Naive thymus-derived CD4-positive, alpha-beta T cell (primary cell): ENCODE measurements at regions of chr18 and their contacts with region 1.

Region 1: GRCh38 chr18:45690975-45691815 is 32.8 kb upstream of the SLC14A1 start:
- DNase-seq: peak; percentile 42 to 80 (median 70)
- ATAC-seq: peak; percentile 30
- H3K4me3 ChIP-seq: no peak overlapping the region
- H3K4me3 Mint-ChIP-seq: peak overlapping the region in 3 of 10 donors; percentile 19 to 60 (median 31)
- H3K27ac ChIP-seq: no peak overlapping the region
- H3K27ac Mint-ChIP-seq: peak overlapping the region in 2 of 9 donors; percentile 14 to 15
- H3K4me1 ChIP-seq: peaks cover 38 to 42% of the 10 kb centered on the region in 2 donors
- H3K4me1 Mint-ChIP-seq: peaks cover 29 to 53% (median 43%) of the 10 kb centered on the region in 7 donors
- H3K27me3 ChIP-seq: no peaks in the 10 kb centered on the region
- H3K27me3 Mint-ChIP-seq: peaks cover 0 to 58% (median 5%) of the 10 kb centered on the region in 5 donors

Region 2: GRCh38 chr18:45664824-45665763 is 26.1 kb before region 1 on chr18:
- CTCF ChIA-PET with region 1: interaction called, 102 read pairs
- POLR2A ChIA-PET with region 1: interaction called, 120 read pairs
- intact Hi-C with region 1: loop called (anchors 1 kb)
- DNase-seq: peak; percentile 35 to 76 (median 63)
- ATAC-seq: peak; percentile 86
- H3K4me3 ChIP-seq: no peak overlapping the region
- H3K4me3 Mint-ChIP-seq: peak overlapping the region; percentile 1 to 87 (median 62)
- H3K27ac ChIP-seq: no peak overlapping the region
- H3K27ac Mint-ChIP-seq: peak overlapping the region; percentile 8 to 91 (median 50)
- H3K4me1 ChIP-seq: peaks cover 41 to 49% of the 10 kb centered on the region in 2 donors
- H3K4me1 Mint-ChIP-seq: peaks cover 38 to 67% (median 53%) of the 10 kb centered on the region in 7 donors
- H3K27me3 ChIP-seq: no peaks in the 10 kb centered on the region
- H3K27me3 Mint-ChIP-seq: peaks cover 0 to 20% (median 0%) of the 10 kb centered on the region in 5 donors

Region 3: DNA sequence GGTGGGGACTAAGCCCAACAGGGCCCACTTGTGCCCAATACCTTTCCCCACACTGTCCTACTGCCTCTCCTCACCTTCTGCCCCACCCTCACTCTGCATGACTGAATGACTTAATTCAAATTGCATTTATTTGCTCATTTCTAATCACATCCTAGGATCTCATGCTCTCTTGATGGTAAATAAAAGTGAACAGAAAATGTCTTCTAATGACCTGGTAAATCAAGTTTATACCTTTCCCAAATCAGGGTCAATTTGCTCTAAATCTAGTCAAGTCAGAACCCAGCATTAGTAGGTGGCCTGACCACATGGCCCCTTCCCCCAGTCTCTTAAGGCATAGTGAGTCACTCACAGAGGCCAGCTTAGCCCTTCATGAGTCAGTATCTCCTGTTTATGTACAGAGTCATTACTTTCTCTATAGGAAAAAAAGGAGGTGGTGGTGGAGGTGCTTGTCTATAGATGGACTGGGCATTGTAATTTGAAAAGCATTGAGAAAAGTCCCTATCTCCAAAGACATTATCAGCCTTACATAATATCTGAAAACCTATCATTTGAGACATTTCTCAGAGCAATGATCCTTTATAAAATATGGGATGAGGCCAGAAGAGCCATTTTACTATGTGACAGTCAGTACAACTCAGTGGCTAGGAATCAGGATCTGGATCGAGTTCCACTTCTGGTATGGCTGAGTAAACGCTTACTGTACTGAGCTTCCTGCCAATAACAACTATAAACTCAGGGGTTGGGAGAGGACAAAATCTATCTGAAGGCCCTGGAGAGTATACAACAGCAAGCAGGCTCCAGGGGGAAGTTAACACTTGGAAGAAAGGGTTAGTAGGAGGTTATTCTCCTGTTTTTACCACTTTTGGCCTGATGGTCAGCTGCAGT is 111.7 kb after region 1 on chr18:
- CTCF ChIA-PET with region 1: interaction called, 3 read pairs
- POLR2A ChIA-PET with region 1: no interaction called
- intact Hi-C with region 1: loop called in 1 of 2 experiments (anchors 1 kb)
- DNase-seq: no peak
- ATAC-seq: peak; percentile 41
- H3K4me3 ChIP-seq: no peak overlapping the region
- H3K4me3 Mint-ChIP-seq: no peak overlapping the region
- H3K27ac ChIP-seq: no peak overlapping the region
- H3K27ac Mint-ChIP-seq: no peak overlapping the region
- H3K4me1 ChIP-seq: no peaks in the 10 kb centered on the region
- H3K4me1 Mint-ChIP-seq: peaks cover 0 to 4% (median 0%) of the 10 kb centered on the region in 7 donors
- H3K27me3 ChIP-seq: no peaks in the 10 kb centered on the region
- H3K27me3 Mint-ChIP-seq: peaks cover 5 to 32% (median 11%) of the 10 kb centered on the region in 5 donors

Region 4: DNA sequence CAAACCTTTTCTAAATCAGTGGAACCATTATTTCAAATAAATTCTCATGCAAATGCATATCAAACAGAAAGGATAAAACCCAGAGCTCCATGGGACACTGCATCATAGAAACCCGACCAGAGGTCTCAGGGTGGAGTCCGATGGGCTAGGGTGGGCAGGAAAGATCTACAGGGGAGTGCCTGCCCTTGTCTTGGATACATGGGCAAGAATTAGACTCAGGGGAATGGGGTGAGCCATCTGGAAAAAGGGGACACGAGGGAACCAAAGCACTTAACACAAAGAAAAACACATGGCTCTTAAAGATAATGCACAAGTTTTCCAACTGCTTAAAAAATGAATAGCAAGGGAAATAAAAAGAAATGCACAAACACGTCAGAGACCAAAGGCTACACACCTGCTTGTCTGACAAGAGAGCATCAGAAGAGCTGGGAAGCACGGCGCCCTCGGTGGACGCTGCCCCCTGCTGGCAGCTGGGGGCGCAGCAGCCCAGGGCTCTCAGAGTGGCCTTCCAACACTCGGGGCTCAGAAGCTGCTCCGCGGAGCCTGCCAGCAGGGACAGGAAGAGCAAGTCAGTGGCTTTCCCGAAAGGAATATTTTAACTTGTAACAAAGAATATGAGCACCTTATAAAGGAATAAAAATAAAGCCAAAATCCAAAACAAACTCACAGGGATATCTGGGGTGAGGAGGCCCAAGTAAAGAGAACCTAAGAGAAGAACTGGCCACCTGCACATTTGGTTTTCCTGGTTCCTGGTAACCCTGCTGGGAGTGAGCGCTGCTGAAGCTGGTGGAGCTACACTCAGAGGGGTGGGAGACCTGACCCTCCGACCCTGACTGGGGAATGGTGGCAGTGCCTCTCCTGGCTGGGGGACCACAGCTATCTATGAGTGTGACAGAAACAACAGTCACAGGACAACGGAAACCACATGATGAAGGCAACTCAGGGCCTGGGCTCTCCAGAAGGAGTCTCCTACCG is 188.8 kb after region 1 on chr18:
- CTCF ChIA-PET with region 1: interaction called, 57 read pairs
- POLR2A ChIA-PET with region 1: interaction called, 3 read pairs
- intact Hi-C with region 1: loop called (anchors 1 kb)
- DNase-seq: peak; percentile 48 to 80 (median 69)
- ATAC-seq: peak; percentile 98
- H3K4me3 ChIP-seq: no peak overlapping the region
- H3K4me3 Mint-ChIP-seq: peak overlapping the region in 1 of 10 donors; percentile 8
- H3K27ac ChIP-seq: no peak overlapping the region
- H3K27ac Mint-ChIP-seq: peak overlapping the region in 7 of 9 donors; percentile 17 to 67 (median 41)
- H3K4me1 ChIP-seq: peaks cover 0 to 3% of the 10 kb centered on the region in 2 donors
- H3K4me1 Mint-ChIP-seq: peaks cover 9 to 16% (median 16%) of the 10 kb centered on the region in 7 donors
- H3K27me3 ChIP-seq: no peaks in the 10 kb centered on the region
- H3K27me3 Mint-ChIP-seq: no peaks in the 10 kb centered on the region

Region 5: DNA sequence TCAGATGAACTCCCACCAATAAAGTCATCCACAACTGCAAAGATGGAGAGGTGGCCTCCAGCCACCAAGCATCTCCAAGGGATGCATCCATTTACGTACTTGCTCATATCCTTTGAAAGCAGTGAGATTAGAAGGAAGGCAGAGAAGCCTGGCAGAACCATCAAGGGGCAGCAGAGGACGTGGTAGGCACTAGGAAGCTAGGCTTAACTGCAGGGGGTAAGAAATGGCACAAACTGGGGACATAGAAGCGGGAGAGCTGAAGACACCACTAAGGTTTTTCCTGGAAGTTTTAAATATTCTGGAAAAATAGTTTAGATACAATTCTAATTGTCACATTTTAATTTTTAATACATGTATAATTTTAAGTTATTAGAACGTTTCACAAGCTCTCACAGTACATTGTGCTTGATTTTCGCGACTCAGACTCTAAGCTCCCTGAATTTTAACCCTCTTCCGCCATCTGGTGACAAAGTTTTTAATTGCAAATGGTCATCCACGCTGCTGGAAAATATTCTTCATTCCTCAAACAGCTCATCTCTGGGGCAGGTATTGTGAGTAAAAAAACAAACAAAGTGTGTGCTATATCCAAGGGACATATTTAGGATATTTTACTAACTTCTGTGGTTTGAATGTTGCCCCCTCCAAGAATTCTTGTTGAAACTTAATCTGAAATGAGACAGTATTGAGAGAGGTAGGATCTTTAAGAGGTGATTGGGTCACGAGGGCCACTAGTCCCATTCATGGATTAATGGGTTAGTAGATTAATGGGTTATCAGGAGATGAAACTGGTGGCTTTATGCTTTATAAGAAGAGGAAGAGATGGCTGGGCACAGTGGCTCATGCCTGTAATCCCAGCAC is 382.5 kb after region 1 on chr18:
- CTCF ChIA-PET with region 1: interaction called, 17 read pairs
- POLR2A ChIA-PET with region 1: interaction called, 8 read pairs
- intact Hi-C with region 1: loop called (anchors 1 kb)
- DNase-seq: peak in 8 of 9 donors; percentile 44 to 83 (median 72)
- ATAC-seq: peak; percentile 61
- H3K4me3 ChIP-seq: peak overlapping the region; percentile 23
- H3K4me3 Mint-ChIP-seq: peak overlapping the region in 9 of 10 donors; percentile 57 to 90 (median 85)
- H3K27ac ChIP-seq: no peak overlapping the region
- H3K27ac Mint-ChIP-seq: peak overlapping the region in 4 of 9 donors; percentile 19 to 77 (median 62)
- H3K4me1 ChIP-seq: peaks cover 13 to 25% of the 10 kb centered on the region in 2 donors
- H3K4me1 Mint-ChIP-seq: peaks cover 23 to 41% (median 38%) of the 10 kb centered on the region in 7 donors
- H3K27me3 ChIP-seq: no peaks in the 10 kb centered on the region
- H3K27me3 Mint-ChIP-seq: no peaks in the 10 kb centered on the region

Region 6: GRCh38 chr18:47175908-47176575 is 1484.8 kb after region 1 on chr18 and contains the start of gene IER3IP1:
- CTCF ChIA-PET with region 1: no interaction called
- POLR2A ChIA-PET with region 1: no interaction called
- intact Hi-C with region 1: loop called in 1 of 2 experiments (anchors 10 kb)
- DNase-seq: peak; percentile 71 to 89 (median 85)
- ATAC-seq: peak; percentile 97
- H3K4me3 ChIP-seq: peak within 1 kb of the TSS; percentile 94
- H3K4me3 Mint-ChIP-seq: peak within 1 kb of the TSS in 8 of 10 donors; percentile 6 to 64 (median 53)
- H3K27ac ChIP-seq: peak within 1 kb of the TSS; percentile 72
- H3K27ac Mint-ChIP-seq: peak within 1 kb of the TSS in 6 of 9 donors; percentile 70 to 91 (median 82)
- H3K4me1 ChIP-seq: peaks cover 10 to 17% of the 10 kb centered on the region in 2 donors
- H3K4me1 Mint-ChIP-seq: peaks cover 0 to 9% (median 0%) of the 10 kb centered on the region in 7 donors
- H3K27me3 ChIP-seq: no peaks in the 10 kb centered on the region
- H3K27me3 Mint-ChIP-seq: peaks cover 0 to 12% (median 0%) of the 10 kb centered on the region in 5 donors
- total RNA-seq, gene IER3IP1: 3.5 to 13.4 (median 8.8) TPM